Right lobe of liver (tissue), 6 donors: ENCODE measurements at regions of chr15 and their contacts with region 1.

Region 1: GRCh38 chr15:29403772-29404171 is 134.2 kb upstream of the NSMCE3 start:
- DNase-seq: no peak
- ATAC-seq: peak in 2 of 4 donors; percentile 42 to 49
- H3K4me3 ChIP-seq: no peak overlapping the region
- H3K27ac ChIP-seq: no peak overlapping the region
- H3K4me1 ChIP-seq: no peaks in the 10 kb centered on the region
- H3K27me3 ChIP-seq: no peaks in the 10 kb centered on the region
- CTCF ChIP-seq: no peak
- POLR2A ChIP-seq: no peak

Region 2: GRCh38 chr15:29324746-29325145 is 79.0 kb before region 1 on chr15:
- intact Hi-C with region 1: no loop called
- DNase-seq: no peak
- ATAC-seq: no peak
- H3K4me3 ChIP-seq: no peak overlapping the region
- H3K27ac ChIP-seq: no peak overlapping the region
- H3K4me1 ChIP-seq: no peaks in the 10 kb centered on the region
- H3K27me3 ChIP-seq: no peaks in the 10 kb centered on the region
- CTCF ChIP-seq: no peak
- POLR2A ChIP-seq: no peak

Region 3: DNA sequence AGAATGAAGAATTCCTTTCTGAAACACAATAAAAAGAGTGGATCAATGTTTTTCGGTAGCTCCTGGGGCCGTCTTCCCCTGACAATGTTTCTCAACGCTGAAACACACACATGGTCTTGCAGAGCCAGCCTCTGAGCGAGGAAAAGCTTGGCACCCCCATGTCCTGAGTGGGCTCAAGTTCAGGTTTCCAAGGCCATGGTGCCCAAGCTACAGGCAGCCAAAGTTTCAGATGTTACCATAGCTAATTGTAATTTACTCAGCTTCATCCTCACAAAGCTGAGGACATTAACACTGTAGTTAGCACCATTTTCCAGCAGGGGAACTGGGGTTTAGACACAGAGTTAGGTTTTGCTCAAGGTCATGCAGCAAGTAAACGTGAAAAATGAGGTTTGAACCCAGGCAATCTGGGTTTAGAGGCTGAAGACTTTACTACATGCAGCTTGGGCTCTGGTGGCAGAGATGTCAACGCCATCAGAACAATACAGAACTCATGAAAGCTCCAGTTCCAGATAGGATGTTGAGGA is 219.4 kb after region 1 on chr15:
- intact Hi-C with region 1: loop called in 1 of 2 experiments (anchors 5 kb)
- DNase-seq: no peak
- ATAC-seq: no peak
- H3K4me3 ChIP-seq: no peak overlapping the region
- H3K27ac ChIP-seq: no peak overlapping the region
- H3K4me1 ChIP-seq: no peaks in the 10 kb centered on the region
- H3K27me3 ChIP-seq: no peaks in the 10 kb centered on the region
- CTCF ChIP-seq: no peak
- POLR2A ChIP-seq: no peak